Activated naive CD4-positive, alpha-beta T cell treated with anti-CD3 and anti-CD28 coated beads for 36 hours (primary cell): ENCODE measurements at regions of chr2 and their contacts with region 1.

Region 1: DNA sequence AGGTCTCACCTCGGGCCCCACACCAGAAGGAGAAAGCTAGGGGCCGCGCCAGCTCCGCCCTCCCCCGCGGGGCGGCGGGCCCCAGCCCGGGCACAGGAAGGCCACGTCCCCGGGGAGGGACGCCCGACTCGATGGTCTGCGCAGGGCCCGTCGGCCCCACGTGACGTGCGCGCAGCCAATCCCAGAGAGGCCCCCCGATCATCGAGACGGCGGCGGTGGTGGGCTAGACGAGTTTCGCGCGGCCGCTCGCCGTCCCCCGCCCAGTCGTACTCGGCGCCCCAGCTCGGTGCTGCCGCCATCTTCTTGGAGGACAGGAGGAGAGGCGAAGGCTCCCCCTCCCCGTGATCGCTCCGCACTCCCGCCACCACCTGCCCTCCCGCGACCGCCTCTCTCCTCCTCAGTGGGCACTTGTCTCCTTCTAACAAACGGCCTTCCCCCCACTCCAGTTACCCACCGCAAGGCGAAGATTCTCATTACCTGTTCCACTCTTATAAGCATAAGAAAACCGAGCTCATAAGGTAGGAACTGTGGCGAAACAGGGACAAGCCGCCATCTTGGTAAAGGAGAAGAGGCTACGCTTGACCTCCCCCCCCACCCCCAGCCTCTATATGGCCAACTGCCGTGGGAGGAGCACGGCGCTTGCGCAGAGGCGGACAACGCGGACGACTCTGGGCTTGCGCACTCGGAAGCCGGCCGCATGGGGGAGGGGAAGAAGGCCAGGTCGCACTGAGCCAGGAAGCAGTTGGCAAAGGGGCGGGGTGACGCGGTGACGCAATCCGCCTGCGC is at the start of gene HDLBP:
- DNase-seq: peak; percentile 100
- H3K4me3 Mint-ChIP-seq: peak within 1 kb of the TSS; percentile 100
- H3K27ac Mint-ChIP-seq: peak within 1 kb of the TSS; percentile 100
- H3K4me1 Mint-ChIP-seq: peaks cover 71% of the 10 kb centered on the region
- H3K27me3 Mint-ChIP-seq: no peaks in the 10 kb centered on the region
- total RNA-seq, gene HDLBP: 278 to 297 TPM

Region 2: GRCh38 chr2:240136013-240136670 is 1179.1 kb before region 1 on chr2 and contains the start of gene COPS9:
- CTCF ChIA-PET with region 1: no interaction called
- intact Hi-C with region 1: loop called (anchors 5 kb)
- DNase-seq: peak; percentile 87
- H3K4me3 Mint-ChIP-seq: peak within 1 kb of the TSS; percentile 90
- H3K27ac Mint-ChIP-seq: peak within 1 kb of the TSS; percentile 74
- H3K4me1 Mint-ChIP-seq: peaks cover 25% of the 10 kb centered on the region
- H3K27me3 Mint-ChIP-seq: no peaks in the 10 kb centered on the region
- total RNA-seq, gene COPS9: 84.5 to 91.3 TPM

Region 3: GRCh38 chr2:240780023-240780700 is 535.1 kb before region 1 on chr2:
- CTCF ChIA-PET with region 1: no interaction called
- intact Hi-C with region 1: no loop called
- DNase-seq: no peak
- H3K4me3 Mint-ChIP-seq: no peak overlapping the region
- H3K27ac Mint-ChIP-seq: no peak overlapping the region
- H3K4me1 Mint-ChIP-seq: no peaks in the 10 kb centered on the region
- H3K27me3 Mint-ChIP-seq: no peaks in the 10 kb centered on the region

Region 4: GRCh38 chr2:241102239-241102803 is 213.0 kb before region 1 on chr2 and contains the start of gene MTERF4:
- CTCF ChIA-PET with region 1: no interaction called
- intact Hi-C with region 1: loop called (anchors 2 kb)
- DNase-seq: peak; percentile 93
- H3K4me3 Mint-ChIP-seq: peak within 1 kb of the TSS; percentile 97
- H3K27ac Mint-ChIP-seq: peak within 1 kb of the TSS; percentile 99
- H3K4me1 Mint-ChIP-seq: peaks cover 62% of the 10 kb centered on the region
- H3K27me3 Mint-ChIP-seq: no peaks in the 10 kb centered on the region
- total RNA-seq, gene MTERF4: 35.0 to 38.6 TPM

Region 5: GRCh38 chr2:241339839-241340630 is 24.7 kb after region 1 on chr2:
- CTCF ChIA-PET with region 1: no interaction called
- intact Hi-C with region 1: loop called (anchors 1 kb)
- DNase-seq: no peak
- H3K4me3 Mint-ChIP-seq: no peak overlapping the region
- H3K27ac Mint-ChIP-seq: peak overlapping the region; percentile 80
- H3K4me1 Mint-ChIP-seq: peaks cover 44% of the 10 kb centered on the region
- H3K27me3 Mint-ChIP-seq: no peaks in the 10 kb centered on the region

Region 6: DNA sequence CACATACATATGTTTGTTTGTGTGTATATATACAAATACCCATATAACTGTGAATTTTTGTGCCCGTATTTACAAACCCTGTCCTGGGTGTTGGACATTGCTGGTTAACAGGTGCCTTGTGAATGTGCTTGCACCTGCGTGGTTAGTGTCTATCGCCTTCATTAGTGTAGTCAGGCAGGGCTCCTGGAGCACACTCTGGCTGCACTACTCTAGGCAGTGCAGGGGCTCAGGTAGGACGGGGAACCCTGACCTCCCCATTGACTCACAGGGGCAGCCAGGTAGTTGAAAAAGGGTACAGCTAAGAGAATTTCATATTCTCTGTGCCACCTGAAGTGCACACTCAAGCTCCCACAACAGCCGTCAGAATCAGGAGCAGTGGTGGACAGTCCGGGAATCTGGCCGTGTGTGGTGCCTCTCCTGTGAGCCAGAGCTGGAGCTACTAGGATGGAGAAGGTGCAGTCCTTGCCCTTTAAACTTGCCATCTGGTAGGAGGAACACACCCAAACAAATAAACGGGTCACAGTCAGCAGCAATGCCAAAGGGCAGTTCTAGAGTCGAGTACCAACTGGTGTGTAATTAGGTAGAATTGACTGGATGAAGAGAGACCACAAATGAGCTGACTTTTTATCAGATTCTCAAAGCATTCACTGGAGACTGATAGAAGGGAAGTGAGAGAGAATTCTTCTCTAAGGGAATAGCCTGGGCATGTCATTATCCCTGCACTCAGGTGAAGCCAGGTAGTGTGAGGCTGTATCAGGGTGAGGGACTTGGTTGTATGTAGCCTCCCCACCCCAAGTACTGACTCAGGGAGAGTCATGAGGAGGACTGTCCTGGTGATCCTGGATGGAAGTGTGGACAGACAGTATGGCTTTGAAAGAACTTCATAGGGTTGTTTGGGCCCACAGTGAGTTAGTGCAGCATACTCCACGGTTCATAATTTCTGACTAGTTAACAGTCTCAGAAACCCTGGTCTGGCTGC is 84.9 kb after region 1 on chr2:
- CTCF ChIA-PET with region 1: no interaction called
- intact Hi-C with region 1: no loop called
- DNase-seq: no peak
- H3K4me3 Mint-ChIP-seq: no peak overlapping the region
- H3K27ac Mint-ChIP-seq: no peak overlapping the region
- H3K4me1 Mint-ChIP-seq: no peaks in the 10 kb centered on the region
- H3K27me3 Mint-ChIP-seq: no peaks in the 10 kb centered on the region

Region 7: DNA sequence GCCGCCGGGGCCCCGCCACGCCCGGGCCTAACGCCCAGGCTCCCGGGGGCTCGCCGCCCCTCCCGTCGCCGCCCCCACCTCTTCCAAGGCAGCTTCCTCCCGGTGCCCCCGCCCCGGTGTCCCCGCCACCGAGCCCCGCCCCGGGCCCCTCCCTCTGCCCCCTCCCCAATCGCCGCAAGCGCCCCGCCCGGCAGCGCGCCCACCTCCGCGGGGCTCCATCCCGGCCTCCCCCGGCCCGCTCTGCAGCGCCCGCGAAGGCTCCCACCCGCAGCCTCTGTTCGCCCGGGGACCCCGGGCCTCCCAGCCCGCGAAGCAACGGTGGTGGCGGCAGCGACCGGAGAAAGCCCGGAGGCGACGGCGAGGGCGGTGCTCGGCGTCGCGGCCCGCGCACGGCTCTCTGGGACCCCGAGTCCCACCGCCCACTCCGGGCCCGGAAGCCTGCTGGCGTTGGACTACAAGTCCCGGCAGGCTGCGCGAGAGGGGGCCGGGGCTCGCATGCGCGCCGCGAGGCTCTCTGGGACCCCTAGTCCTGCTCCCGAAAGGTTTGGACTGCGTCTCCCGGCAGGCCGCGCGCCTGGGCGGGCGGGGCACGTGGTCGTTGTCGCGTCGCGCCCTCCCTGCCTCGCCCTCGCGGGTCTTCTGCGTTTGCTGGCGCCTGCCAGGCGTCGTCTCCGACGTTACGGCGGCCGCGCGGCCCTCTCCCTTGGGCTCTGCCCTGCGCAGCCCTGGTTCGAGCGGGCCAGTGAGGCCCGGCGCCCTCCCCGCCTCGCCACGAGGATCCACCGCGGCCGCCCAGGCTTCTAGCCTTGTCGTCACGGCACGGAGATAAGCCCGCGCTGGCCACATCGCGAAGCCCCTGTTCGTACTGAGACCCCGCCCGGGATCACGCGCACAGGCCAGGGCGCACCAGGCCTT is 193.2 kb after region 1 on chr2 and contains the start of gene STK25:
- CTCF ChIA-PET with region 1: no interaction called
- intact Hi-C with region 1: loop called (anchors 1 kb)
- DNase-seq: peak; percentile 98
- H3K4me3 Mint-ChIP-seq: peak within 1 kb of the TSS; percentile 79
- H3K27ac Mint-ChIP-seq: no peak within 1 kb of the TSS
- H3K4me1 Mint-ChIP-seq: peaks cover 21% of the 10 kb centered on the region
- H3K27me3 Mint-ChIP-seq: no peaks in the 10 kb centered on the region
- total RNA-seq, gene STK25: 81.2 to 88.4 TPM

Region 8: GRCh38 chr2:241637000-241637791 is 321.9 kb after region 1 on chr2 and contains the starts of genes ATG4B and THAP4:
- CTCF ChIA-PET with region 1: no interaction called
- intact Hi-C with region 1: loop called (anchors 1 kb)
- DNase-seq: peak; percentile 76
- H3K4me3 Mint-ChIP-seq: peak within 1 kb of the TSS; percentile 84
- H3K27ac Mint-ChIP-seq: peak within 1 kb of the TSS; percentile 80
- H3K4me1 Mint-ChIP-seq: peaks cover 54% of the 10 kb centered on the region
- H3K27me3 Mint-ChIP-seq: no peaks in the 10 kb centered on the region
- total RNA-seq, gene ATG4B: 71.5 to 82.5 TPM
- total RNA-seq, gene THAP4: 36.4 to 38.8 TPM